Activated CD4-positive, alpha-beta T cell treated with anti-CD3 and anti-CD28 coated beads for 36 hours (primary cell): ENCODE measurements at regions of chr2 and their contacts with region 1.

Region 1: DNA sequence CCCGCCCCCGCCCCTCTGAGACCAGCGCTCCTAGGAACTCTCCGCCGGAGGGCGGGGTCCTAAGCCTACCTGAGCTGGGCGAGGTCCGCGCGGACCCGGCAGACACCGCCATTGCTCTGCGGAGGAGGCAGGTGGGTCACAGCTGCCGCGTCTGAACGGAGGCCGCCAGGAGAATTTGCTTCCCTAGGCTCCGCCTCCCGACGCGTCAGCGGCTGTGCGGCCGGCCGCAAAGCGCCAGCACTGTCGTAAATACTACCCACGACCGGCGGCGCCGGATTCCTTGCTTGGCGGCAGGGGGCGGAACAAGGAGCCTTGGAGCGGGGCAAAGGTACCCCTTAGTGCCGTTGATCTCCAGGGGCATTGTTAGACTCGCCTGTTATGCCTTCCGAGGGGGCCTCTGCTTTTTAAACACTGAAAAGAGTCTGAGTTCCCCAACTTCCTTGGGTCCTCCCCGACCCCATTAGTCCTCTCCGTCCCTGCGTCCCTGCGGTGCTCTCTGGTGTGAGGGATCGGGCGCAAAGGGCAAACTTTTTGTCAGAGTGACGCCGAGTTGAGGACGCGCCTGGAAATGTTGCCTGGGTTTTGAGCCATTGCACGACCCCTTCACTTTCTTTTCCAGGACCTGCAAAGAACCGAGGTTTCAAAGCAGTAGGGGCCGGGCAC is at the start of gene GGCX:
- DNase-seq: peak; percentile 98
- ATAC-seq: peak; percentile 94
- H3K4me3 Mint-ChIP-seq: peak within 1 kb of the TSS; percentile 95
- H3K27ac Mint-ChIP-seq: peak within 1 kb of the TSS; percentile 93
- H3K4me1 Mint-ChIP-seq: peaks cover 33% of the 10 kb centered on the region
- H3K27me3 Mint-ChIP-seq: no peaks in the 10 kb centered on the region
- total RNA-seq, gene GGCX: 20.1 to 22.2 TPM

Region 2: DNA sequence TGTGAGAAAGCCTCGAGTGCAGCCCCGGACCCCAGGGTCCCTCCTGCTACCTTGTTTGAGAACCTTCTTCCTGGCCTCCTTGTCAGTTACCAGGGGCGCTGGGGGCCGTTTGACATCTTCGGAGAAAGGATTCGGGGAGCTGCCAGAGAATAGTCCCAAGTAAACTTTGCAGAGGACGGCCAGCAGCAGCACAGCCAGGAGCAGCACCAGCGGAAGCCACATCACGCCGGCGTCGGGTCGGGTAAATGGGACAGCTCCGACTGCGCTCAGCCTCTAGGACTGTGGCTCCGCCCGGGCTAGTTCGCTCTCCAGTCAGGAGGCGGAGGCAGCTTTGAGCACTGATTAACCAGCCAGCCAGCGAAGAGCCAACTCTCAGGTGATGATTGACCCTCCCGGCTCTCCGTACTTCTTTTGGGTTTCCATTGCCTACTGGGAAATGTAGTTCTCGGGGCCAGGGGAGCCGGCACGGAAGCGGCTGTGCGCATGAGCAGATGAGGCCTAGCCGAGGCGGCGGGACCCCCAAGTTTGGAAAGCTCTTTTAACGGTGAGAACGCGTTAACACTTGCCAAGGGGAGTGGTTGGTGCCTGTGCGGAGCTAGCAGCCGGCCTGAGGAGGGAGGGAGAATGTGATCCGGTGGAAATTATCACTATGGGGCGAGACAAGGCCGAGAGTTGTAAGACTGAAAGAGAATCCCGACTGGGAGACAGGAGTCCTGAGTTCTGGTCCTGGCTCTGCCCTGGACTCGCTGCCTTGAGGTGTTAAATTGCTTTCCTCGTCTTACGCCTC is 207.0 kb before region 1 on chr2 and contains the starts of genes ELMOD3 and RETSAT:
- CTCF ChIA-PET with region 1: no interaction called
- POLR2A ChIA-PET with region 1: interaction called, 3 read pairs
- intact Hi-C with region 1: loop called (anchors 1 kb)
- DNase-seq: peak; percentile 98
- ATAC-seq: peak; percentile 100
- H3K4me3 Mint-ChIP-seq: peak within 1 kb of the TSS; percentile 89
- H3K27ac Mint-ChIP-seq: peak within 1 kb of the TSS; percentile 99
- H3K4me1 Mint-ChIP-seq: peaks cover 34% of the 10 kb centered on the region
- H3K27me3 Mint-ChIP-seq: no peaks in the 10 kb centered on the region
- total RNA-seq, gene ELMOD3: 11.2 to 12.9 TPM
- total RNA-seq, gene RETSAT: 18.1 to 18.7 TPM

Region 3: DNA sequence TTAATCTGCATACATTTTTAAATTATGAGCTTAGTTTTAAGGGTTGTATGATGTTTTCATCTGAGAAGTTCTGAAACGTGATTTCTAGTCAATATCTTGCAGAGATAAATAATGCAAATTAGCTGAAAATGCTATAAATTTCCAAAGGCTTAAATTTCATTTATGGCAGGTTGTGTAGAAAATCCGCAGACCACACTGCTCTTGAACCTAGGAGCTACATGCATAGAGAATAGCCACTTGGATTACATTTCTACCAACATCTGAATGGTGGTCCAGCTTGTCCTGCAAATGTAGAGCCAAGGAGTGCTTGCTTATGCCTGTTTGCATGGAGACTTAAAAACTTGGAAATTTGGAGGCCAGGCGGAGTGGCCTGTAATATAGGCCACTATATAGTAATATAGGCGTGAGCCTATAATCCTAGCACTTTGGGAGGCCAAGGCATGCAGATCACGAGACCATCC is 15.6 kb before region 1 on chr2:
- CTCF ChIA-PET with region 1: interaction called, 60 read pairs
- POLR2A ChIA-PET with region 1: interaction called, 20 read pairs
- intact Hi-C with region 1: loop called in 1 of 2 experiments (anchors 2 kb)
- DNase-seq: no peak
- ATAC-seq: peak; percentile 20
- H3K4me3 Mint-ChIP-seq: peak overlapping the region; percentile 3
- H3K27ac Mint-ChIP-seq: no peak overlapping the region
- H3K4me1 Mint-ChIP-seq: peaks cover 26% of the 10 kb centered on the region
- H3K27me3 Mint-ChIP-seq: no peaks in the 10 kb centered on the region

Region 4: DNA sequence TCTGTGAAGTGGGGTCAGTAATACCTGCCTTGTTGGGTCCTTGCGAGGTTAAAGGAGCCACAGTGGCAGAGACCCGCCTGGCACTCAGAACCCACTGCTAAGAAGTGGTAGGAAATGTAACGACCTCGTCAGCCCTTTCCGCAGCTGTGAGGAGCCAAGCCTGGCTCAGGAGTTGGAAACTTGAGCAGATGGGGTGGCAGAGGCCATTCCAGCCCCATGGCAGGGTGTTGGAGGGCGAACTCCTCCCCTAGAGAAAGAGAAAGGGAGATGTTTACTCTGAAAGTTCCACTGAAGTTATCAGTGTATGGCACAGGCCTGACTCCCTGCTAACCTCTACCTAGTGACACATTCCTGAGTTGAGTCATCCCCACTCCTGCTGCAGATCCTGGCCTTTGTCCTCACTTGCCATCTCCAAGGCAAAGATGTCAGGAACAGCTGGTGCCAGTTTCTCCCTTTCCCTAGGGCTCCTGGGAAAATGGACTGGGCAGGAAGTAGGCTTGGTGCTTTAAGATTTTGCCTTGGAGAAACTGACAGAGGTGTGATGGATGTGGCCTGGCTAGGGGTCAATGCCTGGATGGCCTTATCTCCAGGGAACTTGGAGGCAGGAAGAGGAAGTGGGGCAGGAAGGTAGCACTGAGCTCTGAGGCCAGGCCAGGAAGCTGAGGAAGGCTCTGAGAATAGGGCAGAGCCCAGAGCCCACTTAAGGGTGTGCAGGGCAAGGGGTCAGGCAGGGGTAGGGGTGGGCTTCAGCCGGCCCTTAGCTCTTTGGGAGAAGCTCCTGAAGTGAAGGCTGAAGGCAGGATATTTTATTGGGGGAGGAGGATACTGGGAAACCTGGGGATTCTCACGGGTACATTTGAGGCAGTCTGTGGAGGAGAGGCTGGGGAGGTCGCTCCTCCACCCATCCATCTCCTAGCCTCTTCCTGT is 23.7 kb after region 1 on chr2:
- CTCF ChIA-PET with region 1: no interaction called
- POLR2A ChIA-PET with region 1: interaction called, 6 read pairs
- intact Hi-C with region 1: loop called in 1 of 2 experiments (anchors 1 kb)
- DNase-seq: peak; percentile 52
- ATAC-seq: peak; percentile 79
- H3K4me3 Mint-ChIP-seq: peak overlapping the region; percentile 75
- H3K27ac Mint-ChIP-seq: peak overlapping the region; percentile 87
- H3K4me1 Mint-ChIP-seq: peaks cover 34% of the 10 kb centered on the region
- H3K27me3 Mint-ChIP-seq: no peaks in the 10 kb centered on the region

Region 5: DNA sequence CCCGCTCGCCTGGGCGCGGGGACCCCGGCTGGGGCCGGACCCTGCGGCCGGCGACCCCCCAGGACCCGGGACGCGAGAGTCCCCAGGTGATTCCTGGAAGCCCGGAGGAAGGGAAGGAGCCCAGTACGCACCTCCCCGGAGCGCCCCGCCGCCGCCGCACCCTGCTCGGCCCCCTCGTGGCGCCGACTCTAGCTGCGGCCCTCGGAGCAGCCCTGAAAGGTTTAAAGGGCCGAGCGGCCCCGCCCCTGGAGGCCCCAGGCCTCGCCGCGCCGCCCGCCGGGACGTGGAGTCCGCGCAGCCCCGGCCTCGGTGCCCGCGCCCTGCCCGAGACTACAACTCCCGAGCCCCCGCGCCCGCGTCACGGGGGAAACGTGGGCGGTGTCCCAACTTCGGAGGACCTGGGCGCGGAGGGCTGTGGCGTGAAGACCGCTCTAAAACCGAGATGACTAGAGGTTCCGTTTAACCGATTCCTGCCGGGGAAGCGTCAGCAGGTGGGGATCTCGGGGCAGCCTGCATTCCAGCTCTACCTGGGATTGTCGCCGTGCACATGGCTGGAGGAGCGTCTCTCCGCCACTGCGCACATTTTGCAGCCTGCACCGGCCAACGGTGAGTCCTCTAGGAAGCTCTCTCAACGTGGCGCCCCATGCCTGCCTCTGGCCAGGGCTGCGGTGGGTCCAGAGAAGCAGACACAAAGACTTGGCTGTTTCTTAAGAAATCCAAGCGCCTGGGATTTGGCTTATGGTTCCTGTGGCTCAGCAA is 41.2 kb after region 1 on chr2 and contains the start of gene TMEM150A:
- CTCF ChIA-PET with region 1: interaction called, 3 read pairs
- POLR2A ChIA-PET with region 1: no interaction called
- intact Hi-C with region 1: loop called (anchors 1 to 2 kb)
- DNase-seq: peak; percentile 92
- ATAC-seq: peak; percentile 95
- H3K4me3 Mint-ChIP-seq: peak within 1 kb of the TSS; percentile 90
- H3K27ac Mint-ChIP-seq: peak within 1 kb of the TSS; percentile 78
- H3K4me1 Mint-ChIP-seq: peaks cover 27% of the 10 kb centered on the region
- H3K27me3 Mint-ChIP-seq: no peaks in the 10 kb centered on the region
- total RNA-seq, gene TMEM150A: 1.3 to 2.5 TPM